Activated B cell treated with CpG ODN at 0.5 μM for 24 hours (primary cell): ENCODE measurements at regions of chrX and their contacts with region 1.

Region 1: GRCh38 chrX:3788509-3789233 is 75.2 kb upstream of the PRKX start:
- DNase-seq: no peak
- ATAC-seq: no peak
- H3K4me3 Mint-ChIP-seq: no peak overlapping the region
- H3K27ac Mint-ChIP-seq: no peak overlapping the region
- H3K4me1 Mint-ChIP-seq: no peaks in the 10 kb centered on the region
- H3K27me3 Mint-ChIP-seq: peaks cover 9% of the 10 kb centered on the region
- CTCF ChIP-seq: no peak

Region 2: GRCh38 chrX:3037218-3037617 is 751.5 kb before region 1 on chrX:
- CTCF ChIA-PET with region 1: no interaction called
- POLR2A ChIA-PET with region 1: no interaction called
- intact Hi-C with region 1: loop called (anchors 10 kb)
- DNase-seq: no peak
- ATAC-seq: no peak
- H3K4me3 Mint-ChIP-seq: no peak overlapping the region
- H3K27ac Mint-ChIP-seq: no peak overlapping the region
- H3K4me1 Mint-ChIP-seq: no peaks in the 10 kb centered on the region
- H3K27me3 Mint-ChIP-seq: no peaks in the 10 kb centered on the region
- CTCF ChIP-seq: no peak

Region 3: DNA sequence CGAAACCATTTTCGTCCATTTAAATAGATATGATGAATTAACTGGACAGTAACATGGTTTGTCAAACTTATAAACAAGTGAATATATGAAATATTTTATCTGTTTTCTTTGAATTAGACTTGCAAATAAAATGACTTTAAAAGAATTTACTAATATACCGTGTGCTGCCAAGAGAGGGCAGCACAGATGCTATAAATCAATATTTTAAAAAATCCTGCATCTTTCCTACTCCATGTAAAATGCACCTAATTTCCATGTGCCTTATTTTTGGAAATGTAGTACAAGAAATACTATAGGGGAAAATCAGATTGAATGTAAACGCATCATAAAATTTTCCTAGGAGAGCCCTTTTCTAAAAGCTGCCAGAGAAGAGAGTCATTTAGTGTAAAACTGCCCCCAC is 137.4 kb before region 1 on chrX:
- CTCF ChIA-PET with region 1: interaction called, 3 read pairs
- POLR2A ChIA-PET with region 1: no interaction called
- intact Hi-C with region 1: loop called (anchors 1 kb)
- DNase-seq: no peak
- ATAC-seq: no peak
- H3K4me3 Mint-ChIP-seq: no peak overlapping the region
- H3K27ac Mint-ChIP-seq: no peak overlapping the region
- H3K4me1 Mint-ChIP-seq: no peaks in the 10 kb centered on the region
- H3K27me3 Mint-ChIP-seq: no peaks in the 10 kb centered on the region
- CTCF ChIP-seq: no peak